Heart left ventricle (tissue), 16 donors: ENCODE measurements at regions of chr4 and their contacts with region 1.

Region 1: GRCh38 chr4:100517864-100518341 is at the start of gene EMCN:
- DNase-seq: peak in 3 of 5 donors; percentile 18 to 52 (median 24)
- ATAC-seq: peak; percentile 67 to 93 (median 84)
- H3K4me3 ChIP-seq: peak within 1 kb of the TSS; percentile 0 to 65 (median 52)
- H3K27ac ChIP-seq: peak within 1 kb of the TSS; percentile 36 to 87 (median 77)
- H3K4me1 ChIP-seq: peaks cover 0 to 14% (median 0%) of the 10 kb centered on the region in 12 donors
- H3K27me3 ChIP-seq: no peaks in the 10 kb centered on the region
- CTCF ChIP-seq: no peak
- POLR2A ChIP-seq: peak in 1 of 2 donors; percentile 48
- total RNA-seq, gene EMCN: 21.3 to 52.6 (median 31.5) TPM

Region 2: DNA sequence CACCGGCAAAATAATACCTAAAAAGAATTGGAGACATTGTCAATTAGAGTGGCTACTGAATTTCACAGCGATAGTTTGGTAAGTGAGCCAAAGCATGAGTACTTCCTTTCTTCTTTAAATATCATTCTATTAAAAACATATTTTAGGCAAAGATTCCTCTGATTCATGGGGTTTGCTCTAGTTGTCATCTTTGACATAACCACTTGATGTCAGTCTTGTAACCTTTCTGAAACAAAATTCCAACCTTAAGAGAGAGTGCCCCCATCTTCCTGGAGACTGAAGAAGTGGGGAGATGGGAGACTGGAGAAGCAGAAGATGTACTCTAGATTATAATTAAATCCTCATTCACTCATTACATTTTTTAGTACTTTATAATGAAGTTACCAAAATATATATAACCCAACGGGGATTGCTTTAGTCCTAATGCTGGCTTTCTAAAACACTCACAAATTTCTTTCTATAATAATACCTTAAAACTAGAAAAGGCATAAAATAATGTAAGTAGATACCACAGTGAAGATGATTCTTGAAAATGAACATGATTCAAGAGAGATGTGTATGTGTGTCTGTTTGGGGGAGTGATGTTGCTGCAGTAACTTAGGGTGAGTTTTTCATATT is 96.4 kb before region 1 on chr4:
- intact Hi-C with region 1: loop called in 1 of 10 experiments (anchors 5 kb)
- DNase-seq: no peak
- ATAC-seq: peak in 1 of 4 donors; percentile 70
- H3K4me3 ChIP-seq: peak overlapping the region in 3 of 12 donors; percentile 27 to 36 (median 30)
- H3K27ac ChIP-seq: peak overlapping the region in 5 of 12 donors; percentile 12 to 37 (median 17)
- H3K4me1 ChIP-seq: peaks cover 0 to 29% (median 5%) of the 10 kb centered on the region in 12 donors
- H3K27me3 ChIP-seq: no peaks in the 10 kb centered on the region
- CTCF ChIP-seq: peak; percentile 27 to 70 (median 49)
- POLR2A ChIP-seq: no peak

Region 3: GRCh38 chr4:100649417-100649816 is 131.5 kb after region 1 on chr4:
- intact Hi-C with region 1: loop called in 4 of 10 experiments (anchors 5 to 10 kb)
- DNase-seq: no peak
- ATAC-seq: peak in 3 of 4 donors; percentile 54 to 79 (median 57)
- H3K4me3 ChIP-seq: no peak overlapping the region
- H3K27ac ChIP-seq: peak overlapping the region in 5 of 12 donors; percentile 1 to 39 (median 20)
- H3K4me1 ChIP-seq: peaks cover 0 to 28% (median 11%) of the 10 kb centered on the region in 12 donors
- H3K27me3 ChIP-seq: no peaks in the 10 kb centered on the region
- CTCF ChIP-seq: no peak
- POLR2A ChIP-seq: no peak

Region 4: DNA sequence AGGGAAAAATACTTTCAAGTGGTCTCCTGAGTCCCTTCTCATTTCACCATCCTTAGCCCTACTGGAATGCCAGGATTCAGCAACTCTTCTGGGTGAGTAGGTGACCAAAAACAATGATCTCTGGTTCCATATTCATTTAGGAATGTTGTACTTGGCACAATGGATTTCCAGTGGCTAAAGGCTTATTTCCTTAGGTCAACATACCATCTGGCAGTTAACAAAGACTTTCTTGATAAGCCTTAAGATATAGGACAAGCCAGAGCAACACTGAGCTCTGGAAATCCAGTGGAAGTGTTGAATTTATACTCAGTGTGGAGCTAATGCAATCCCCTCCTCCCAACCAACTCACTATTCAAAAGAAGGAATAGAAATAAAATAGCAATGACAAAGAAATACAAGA is 139.3 kb after region 1 on chr4:
- intact Hi-C with region 1: loop called in 3 of 10 experiments (anchors 5 to 10 kb)
- DNase-seq: no peak
- ATAC-seq: peak; percentile 32 to 76 (median 50)
- H3K4me3 ChIP-seq: no peak overlapping the region
- H3K27ac ChIP-seq: peak overlapping the region in 1 of 12 donors; percentile 13
- H3K4me1 ChIP-seq: peaks cover 0 to 5% (median 0%) of the 10 kb centered on the region in 12 donors
- H3K27me3 ChIP-seq: no peaks in the 10 kb centered on the region
- CTCF ChIP-seq: no peak
- POLR2A ChIP-seq: no peak

Region 5: GRCh38 chr4:100736641-100737451 is 218.9 kb after region 1 on chr4:
- intact Hi-C with region 1: loop called in 6 of 10 experiments (anchors 1 to 10 kb)
- DNase-seq: peak in 2 of 5 donors; percentile 18
- ATAC-seq: peak; percentile 51 to 87 (median 76)
- H3K4me3 ChIP-seq: no peak overlapping the region
- H3K27ac ChIP-seq: peak overlapping the region in 9 of 12 donors; percentile 0 to 67 (median 40)
- H3K4me1 ChIP-seq: peaks cover 0 to 19% (median 8%) of the 10 kb centered on the region in 12 donors
- H3K27me3 ChIP-seq: no peaks in the 10 kb centered on the region
- CTCF ChIP-seq: no peak
- POLR2A ChIP-seq: no peak